A549 (cell line): ENCODE measurements at regions of chr12 and their contacts with region 1.

Region 1: GRCh38 chr12:7101694-7102131 is 7.3 kb downstream of the C1RL start:
- DNase-seq: no peak
- ATAC-seq: peak; percentile 37 to 46; a peak in 4 of 6 replicates
- H3K4me3 ChIP-seq: no peak overlapping the region
- H3K27ac ChIP-seq: 0 out of 6 replicates have a peak overlapping the region, but pooled peaks of 1 of the 2 experiments have one; percentile 12
- H3K4me1 ChIP-seq: peaks cover 10% of the 10 kb centered on the region; the same call in 2 of the 3 replicates
- CTCF ChIP-seq: no peak
- EP300 ChIP-seq: no peak
- POLR2A ChIP-seq: no peak
- RAD21 ChIP-seq: no peak

Region 2: DNA sequence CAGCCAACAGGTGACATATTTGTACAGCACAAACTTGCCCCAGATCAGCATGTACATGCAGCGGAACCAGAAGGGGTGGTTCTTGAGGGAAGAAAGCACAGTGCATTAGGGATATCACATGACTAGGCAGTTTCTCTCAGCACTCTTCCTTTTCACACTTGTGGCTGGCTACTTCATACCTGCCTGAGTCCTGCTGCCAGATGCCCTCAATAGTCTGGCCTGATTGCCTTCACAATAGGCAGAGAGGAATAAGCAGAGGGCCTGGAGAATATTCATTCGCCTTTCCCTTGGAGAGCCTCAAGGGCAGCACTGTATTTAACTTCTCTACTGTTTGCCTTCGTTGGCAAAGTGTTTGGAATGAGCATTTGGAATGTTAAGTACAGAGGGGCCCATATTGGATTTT is 123.1 kb before region 1 on chr12:
- CTCF ChIA-PET with region 1: no interaction called
- POLR2A ChIA-PET with region 1: no interaction called
- DNase-seq: no peak
- ATAC-seq: peak in 1 of 2 experiments; percentile 35; a peak in 2 of 6 replicates
- H3K4me3 ChIP-seq: no peak overlapping the region
- H3K27ac ChIP-seq: peak overlapping the region in 1 of 2 experiments; percentile 7; a peak in 1 of 6 replicates
- H3K4me1 ChIP-seq: no peaks in the 10 kb centered on the region
- CTCF ChIP-seq: no peak
- EP300 ChIP-seq: no peak
- POLR2A ChIP-seq: no peak
- RAD21 ChIP-seq: no peak

Region 3: GRCh38 chr12:7060353-7060954 is 41.3 kb before region 1 on chr12 and contains the start of gene C1S:
- CTCF ChIA-PET with region 1: interaction called, 309 read pairs
- POLR2A ChIA-PET with region 1: no interaction called
- DNase-seq: peak; percentile 93 to 95
- ATAC-seq: peak; percentile 99
- H3K4me3 ChIP-seq: peak within 1 kb of the TSS; percentile 15; the same call in 1 of the 3 replicates
- H3K27ac ChIP-seq: peak within 1 kb of the TSS; percentile 77 to 93
- H3K4me1 ChIP-seq: peaks cover 22% of the 10 kb centered on the region
- CTCF ChIP-seq: peak; percentile 96
- EP300 ChIP-seq: no peak
- POLR2A ChIP-seq: peak; percentile 30; the same call in 1 of the 2 replicates
- RAD21 ChIP-seq: peak; percentile 98 to 99
- polyA plus RNA-seq, gene C1S: 107 and 109 TPM in 2 replicates

Region 4: GRCh38 chr12:7769999-7770398 is 668.3 kb after region 1 on chr12:
- CTCF ChIA-PET with region 1: no interaction called
- POLR2A ChIA-PET with region 1: no interaction called
- DNase-seq: no peak
- ATAC-seq: no peak
- H3K4me3 ChIP-seq: no peak overlapping the region
- H3K27ac ChIP-seq: no peak overlapping the region
- H3K4me1 ChIP-seq: no peaks in the 10 kb centered on the region
- CTCF ChIP-seq: no peak
- EP300 ChIP-seq: no peak
- POLR2A ChIP-seq: no peak
- RAD21 ChIP-seq: no peak